ENCODE measurements at regions of chr6 and their contacts with region 1.

Region 1: DNA sequence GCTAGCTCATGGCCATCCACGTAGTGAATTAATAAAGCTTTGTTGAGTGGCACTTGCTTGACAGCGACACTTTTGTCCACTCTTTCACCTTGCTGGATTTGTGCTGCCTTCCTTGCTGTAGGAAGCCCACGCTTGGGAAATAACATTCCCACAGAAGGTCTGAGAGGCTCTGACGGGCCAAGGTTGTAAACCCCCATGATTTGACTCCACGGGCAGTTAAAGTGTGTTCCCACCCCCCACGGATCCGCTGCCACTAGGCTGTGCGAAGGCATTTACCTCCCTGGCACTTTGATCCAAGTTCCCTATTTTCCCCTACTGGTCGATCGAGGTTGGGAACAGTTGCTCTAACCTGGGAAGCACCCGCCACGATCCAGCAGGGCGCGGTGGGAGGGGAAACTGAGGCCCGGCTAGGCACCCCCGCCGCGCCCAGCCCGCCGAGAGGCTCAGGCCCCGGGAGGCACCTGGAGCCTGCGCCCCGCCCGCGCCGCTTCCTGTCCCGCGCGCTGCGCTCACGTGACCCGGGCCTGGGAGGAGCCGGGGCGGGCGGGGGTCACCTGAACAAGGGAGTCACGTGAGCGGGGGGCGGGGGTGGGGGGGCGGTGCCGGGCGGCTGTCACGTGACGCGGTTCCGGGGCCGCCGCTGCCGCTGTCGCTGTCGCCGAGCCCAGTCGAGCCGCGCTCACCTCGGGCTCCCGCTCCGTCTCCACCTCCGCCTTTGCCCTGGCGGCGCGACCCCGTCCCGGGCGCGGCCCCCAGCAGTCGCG is at the start of gene IGF2R:
- DNase-seq: peak; percentile 91 to 94 (median 92)
- H3K4me3 ChIP-seq: peak within 1 kb of the TSS; percentile 61 to 62
- H3K4me3 Mint-ChIP-seq: peak within 1 kb of the TSS; percentile 88 to 96 (median 94)
- H3K27ac ChIP-seq: peak within 1 kb of the TSS; percentile 75
- H3K27ac Mint-ChIP-seq: peak within 1 kb of the TSS; percentile 92 to 97 (median 94)
- H3K4me1 ChIP-seq: peaks cover 44% of the 10 kb centered on the region
- H3K4me1 Mint-ChIP-seq: peaks cover 29 to 45% (median 38%) of the 10 kb centered on the region in 4 donors
- H3K27me3 ChIP-seq: no peaks in the 10 kb centered on the region
- H3K27me3 Mint-ChIP-seq: no peaks in the 10 kb centered on the region
- total RNA-seq, gene IGF2R: 77.5 to 79.2 TPM

Region 2: DNA sequence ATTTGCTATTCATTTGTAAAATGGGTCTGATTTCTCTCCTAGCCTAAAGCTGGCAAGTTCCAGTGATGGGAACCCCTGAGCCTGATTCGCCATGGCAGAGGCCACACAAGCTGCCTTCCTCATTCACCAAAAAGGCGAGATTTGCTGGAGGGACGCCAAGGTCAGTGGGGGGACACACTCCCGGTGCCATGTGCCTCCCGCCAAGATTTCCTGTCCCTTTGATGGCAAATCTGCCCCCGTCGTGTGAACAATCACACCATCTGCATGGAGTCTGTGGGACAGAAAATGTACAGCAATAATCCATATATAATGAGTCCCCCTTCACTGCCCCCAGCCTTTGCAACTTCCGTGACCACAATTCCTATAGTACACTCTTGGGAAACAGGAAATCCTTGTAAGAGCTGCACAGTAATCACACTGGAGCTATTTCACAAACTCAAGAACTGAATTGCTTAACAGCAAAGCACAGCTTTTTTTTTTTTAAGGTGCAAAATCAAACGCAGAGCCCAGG is 15.5 kb before region 1 on chr6:
- CTCF ChIA-PET with region 1: no interaction called
- POLR2A ChIA-PET with region 1: no interaction called
- intact Hi-C with region 1: no loop called
- DNase-seq: no peak
- H3K4me3 ChIP-seq: no peak overlapping the region
- H3K4me3 Mint-ChIP-seq: no peak overlapping the region
- H3K27ac ChIP-seq: no peak overlapping the region
- H3K27ac Mint-ChIP-seq: no peak overlapping the region
- H3K4me1 ChIP-seq: no peaks in the 10 kb centered on the region
- H3K4me1 Mint-ChIP-seq: no peaks in the 10 kb centered on the region
- H3K27me3 ChIP-seq: no peaks in the 10 kb centered on the region
- H3K27me3 Mint-ChIP-seq: peaks cover 2 to 3% of the 10 kb centered on the region in 2 donors

Region 3: GRCh38 chr6:159979136-159979874 is 10.7 kb after region 1 on chr6:
- CTCF ChIA-PET with region 1: interaction called, 6 read pairs
- POLR2A ChIA-PET with region 1: interaction called, 26 read pairs
- intact Hi-C with region 1: no loop called
- DNase-seq: peak in 2 of 5 donors; percentile 18 to 72
- H3K4me3 ChIP-seq: no peak overlapping the region
- H3K4me3 Mint-ChIP-seq: peak overlapping the region in 7 of 8 donors; percentile 32 to 87 (median 66)
- H3K27ac ChIP-seq: peak overlapping the region; percentile 60
- H3K27ac Mint-ChIP-seq: peak overlapping the region; percentile 84 to 96 (median 88)
- H3K4me1 ChIP-seq: peaks cover 93% of the 10 kb centered on the region
- H3K4me1 Mint-ChIP-seq: peaks cover 76 to 96% (median 85%) of the 10 kb centered on the region in 4 donors
- H3K27me3 ChIP-seq: no peaks in the 10 kb centered on the region
- H3K27me3 Mint-ChIP-seq: no peaks in the 10 kb centered on the region

Region 4: DNA sequence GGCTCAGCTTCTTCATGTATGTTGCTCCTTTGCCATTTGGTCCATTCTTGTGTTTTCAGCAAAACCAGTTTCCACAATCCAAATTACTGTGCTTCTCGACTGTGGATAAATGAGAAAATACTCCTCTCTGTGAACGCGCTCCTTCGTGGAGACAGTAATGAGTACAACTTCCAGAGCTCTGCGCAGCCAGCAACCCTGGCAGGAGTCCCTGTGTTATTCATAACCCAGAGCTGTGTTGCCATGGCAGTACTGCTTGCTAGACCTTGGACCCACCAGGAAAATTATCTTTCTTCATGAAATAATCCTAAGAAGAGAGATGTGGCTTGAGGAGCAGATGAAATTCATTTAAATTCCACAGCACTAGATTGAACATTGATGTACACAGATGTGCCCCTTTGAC is 453.2 kb after region 1 on chr6:
- CTCF ChIA-PET with region 1: no interaction called
- POLR2A ChIA-PET with region 1: no interaction called
- intact Hi-C with region 1: no loop called
- DNase-seq: no peak
- H3K4me3 ChIP-seq: no peak overlapping the region
- H3K4me3 Mint-ChIP-seq: no peak overlapping the region
- H3K27ac ChIP-seq: no peak overlapping the region
- H3K27ac Mint-ChIP-seq: no peak overlapping the region
- H3K4me1 ChIP-seq: peaks cover 9% of the 10 kb centered on the region
- H3K4me1 Mint-ChIP-seq: peaks cover 9 to 10% (median 9%) of the 10 kb centered on the region in 4 donors
- H3K27me3 ChIP-seq: peaks cover 3% of the 10 kb centered on the region
- H3K27me3 Mint-ChIP-seq: peaks cover 2 to 4% of the 10 kb centered on the region in 2 donors

Region 5: DNA sequence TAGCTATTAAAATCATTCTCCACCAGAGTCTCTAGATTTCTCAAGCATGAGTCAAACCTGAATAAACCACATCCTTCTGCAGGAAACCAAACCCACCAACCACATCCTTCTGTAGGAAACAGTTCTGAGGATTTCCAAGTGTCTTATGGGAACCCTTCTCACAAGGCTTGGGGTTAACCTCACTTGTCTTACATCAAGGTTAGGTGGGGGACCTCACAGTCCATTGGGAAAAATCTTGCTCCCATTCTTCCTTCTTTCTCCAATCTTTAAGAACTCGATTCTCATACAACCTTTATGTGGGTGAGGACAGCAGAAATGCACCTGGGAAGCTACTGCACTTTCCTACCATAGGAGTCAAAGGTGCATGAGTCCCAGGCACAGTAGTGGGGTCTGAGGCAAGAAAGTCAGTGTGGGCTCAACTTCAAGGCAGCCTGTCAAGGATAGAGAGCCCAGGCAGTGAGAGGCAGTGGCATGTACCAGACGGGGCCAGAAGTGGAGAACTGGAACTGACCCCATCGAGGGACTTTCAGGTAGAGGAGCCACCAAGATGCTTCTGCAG is 494.0 kb after region 1 on chr6:
- CTCF ChIA-PET with region 1: no interaction called
- POLR2A ChIA-PET with region 1: no interaction called
- intact Hi-C with region 1: loop called (anchors 10 kb)
- DNase-seq: peak; percentile 82 to 90 (median 86)
- H3K4me3 ChIP-seq: peak overlapping the region; percentile 23 to 39
- H3K4me3 Mint-ChIP-seq: peak overlapping the region; percentile 51 to 86 (median 73)
- H3K27ac ChIP-seq: no peak overlapping the region
- H3K27ac Mint-ChIP-seq: peak overlapping the region; percentile 25 to 90 (median 85)
- H3K4me1 ChIP-seq: peaks cover 76% of the 10 kb centered on the region
- H3K4me1 Mint-ChIP-seq: peaks cover 60 to 80% (median 71%) of the 10 kb centered on the region in 4 donors
- H3K27me3 ChIP-seq: no peaks in the 10 kb centered on the region
- H3K27me3 Mint-ChIP-seq: no peaks in the 10 kb centered on the region

Region 6: DNA sequence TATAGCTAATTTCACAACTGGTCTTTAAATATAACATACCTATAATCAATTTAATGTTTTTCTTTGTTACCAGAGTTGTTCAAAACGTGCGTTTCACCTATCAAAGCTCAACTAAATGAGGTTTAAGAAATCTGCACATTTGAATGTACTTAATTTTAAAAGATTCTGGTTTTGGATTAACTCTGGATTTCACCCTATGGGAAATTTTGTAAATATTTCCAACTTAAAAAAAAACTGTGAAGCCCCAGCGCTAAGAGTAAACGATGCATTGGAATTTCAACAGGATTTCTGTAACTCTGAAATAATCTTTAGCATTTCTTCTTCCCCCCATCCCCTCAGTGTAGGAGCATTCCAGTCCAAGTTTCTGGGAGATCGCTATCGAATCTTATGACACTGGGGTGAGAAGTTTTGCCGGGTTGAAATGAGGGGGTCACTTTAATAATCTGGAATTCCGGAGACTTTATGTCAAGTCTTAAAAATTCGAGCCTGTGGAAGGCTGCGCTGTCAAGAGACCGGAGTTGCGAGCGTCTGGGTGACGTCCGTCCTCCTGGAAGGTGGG is 1022.3 kb after region 1 on chr6:
- CTCF ChIA-PET with region 1: no interaction called
- POLR2A ChIA-PET with region 1: no interaction called
- intact Hi-C with region 1: no loop called
- DNase-seq: no peak
- H3K4me3 ChIP-seq: peak overlapping the region; percentile 24 to 89
- H3K4me3 Mint-ChIP-seq: peak overlapping the region; percentile 87 to 97 (median 90)
- H3K27ac ChIP-seq: peak overlapping the region; percentile 73
- H3K27ac Mint-ChIP-seq: peak overlapping the region; percentile 81 to 99 (median 90)
- H3K4me1 ChIP-seq: peaks cover 35% of the 10 kb centered on the region
- H3K4me1 Mint-ChIP-seq: peaks cover 25 to 38% (median 32%) of the 10 kb centered on the region in 4 donors
- H3K27me3 ChIP-seq: no peaks in the 10 kb centered on the region
- H3K27me3 Mint-ChIP-seq: no peaks in the 10 kb centered on the region